Breast epithelium (tissue), 4 donors: ENCODE measurements at regions of chr9 and their contacts with region 1.

Region 1: GRCh38 chr9:19102631-19103345 is at the start of gene HAUS6:
- DNase-seq: peak; percentile 94
- H3K4me3 ChIP-seq: peak within 1 kb of the TSS; percentile 57 to 84 (median 70)
- H3K27ac ChIP-seq: peak within 1 kb of the TSS; percentile 89 to 95
- H3K4me1 ChIP-seq: peaks cover 0 to 4% of the 10 kb centered on the region in 2 donors
- H3K27me3 ChIP-seq: no peaks in the 10 kb centered on the region
- CTCF ChIP-seq: peak; percentile 69 to 85 (median 72)
- POLR2A ChIP-seq: peak; percentile 36
- total RNA-seq, gene HAUS6: 8.5 to 14.0 (median 10.5) TPM

Region 2: GRCh38 chr9:18824095-18824666 is 278.6 kb before region 1 on chr9:
- intact Hi-C with region 1: no loop called
- DNase-seq: no peak
- H3K4me3 ChIP-seq: no peak overlapping the region
- H3K27ac ChIP-seq: no peak overlapping the region
- H3K4me1 ChIP-seq: no peaks in the 10 kb centered on the region
- H3K27me3 ChIP-seq: no peaks in the 10 kb centered on the region
- CTCF ChIP-seq: peak in 1 of 3 donors; percentile 31
- POLR2A ChIP-seq: no peak

Region 3: DNA sequence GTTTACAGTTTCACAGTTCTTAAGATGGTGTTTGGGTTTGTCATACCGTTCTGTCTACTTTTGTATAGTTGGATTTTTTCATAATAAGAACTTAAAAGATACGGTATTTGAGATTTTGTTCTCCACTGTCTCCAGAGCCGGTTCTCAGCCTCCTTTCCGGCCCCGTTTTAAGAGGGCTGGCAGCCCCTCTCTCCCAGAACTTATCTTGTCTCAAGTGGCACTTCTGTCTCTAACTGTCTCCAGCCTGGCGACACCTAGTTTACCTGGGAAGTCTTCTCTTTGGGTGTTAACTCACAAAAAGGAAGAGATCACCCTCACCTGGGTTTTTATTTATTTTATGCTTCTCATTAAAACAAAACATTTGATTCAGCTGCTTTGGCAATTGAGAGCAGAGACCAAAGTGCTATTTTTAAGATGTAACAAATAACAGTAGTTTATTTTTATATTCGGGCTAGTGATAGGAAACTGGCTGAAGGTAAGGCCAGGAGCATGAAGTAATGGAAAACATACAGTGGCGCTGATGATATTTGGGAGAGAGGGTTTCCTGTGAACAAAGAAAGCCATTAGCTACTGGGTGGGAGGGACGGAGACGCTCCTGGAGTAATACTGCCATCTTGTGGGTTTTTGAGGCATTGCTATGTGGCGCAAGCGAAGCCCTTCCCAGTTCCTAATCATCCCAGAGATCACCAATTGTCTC is 354.4 kb after region 1 on chr9:
- intact Hi-C with region 1: loop called (anchors 5 kb)
- DNase-seq: peak in 1 of 2 donors; percentile 42
- H3K4me3 ChIP-seq: peak overlapping the region in 1 of 3 donors; percentile 23
- H3K27ac ChIP-seq: peak overlapping the region in 1 of 2 donors; percentile 11
- H3K4me1 ChIP-seq: no peaks in the 10 kb centered on the region
- H3K27me3 ChIP-seq: no peaks in the 10 kb centered on the region
- CTCF ChIP-seq: peak; percentile 73 to 98 (median 89)
- POLR2A ChIP-seq: no peak